HepG2 (cell line): ENCODE measurements at regions of chr1 and their contacts with region 1.

Region 1: GRCh38 chr1:61352845-61353435 is 270.6 kb downstream of the NFIA start:
- DNase-seq: no peak
- ATAC-seq: no peak
- H3K4me3 ChIP-seq: no peak overlapping the region
- H3K27ac ChIP-seq: no peak overlapping the region
- H3K4me1 ChIP-seq: no peaks in the 10 kb centered on the region
- H3K27me3 ChIP-seq: no peaks in the 10 kb centered on the region
- CTCF ChIP-seq: no peak
- EP300 ChIP-seq: no peak
- POLR2A ChIP-seq: no peak
- RAD21 ChIP-seq: no peak

Region 2: DNA sequence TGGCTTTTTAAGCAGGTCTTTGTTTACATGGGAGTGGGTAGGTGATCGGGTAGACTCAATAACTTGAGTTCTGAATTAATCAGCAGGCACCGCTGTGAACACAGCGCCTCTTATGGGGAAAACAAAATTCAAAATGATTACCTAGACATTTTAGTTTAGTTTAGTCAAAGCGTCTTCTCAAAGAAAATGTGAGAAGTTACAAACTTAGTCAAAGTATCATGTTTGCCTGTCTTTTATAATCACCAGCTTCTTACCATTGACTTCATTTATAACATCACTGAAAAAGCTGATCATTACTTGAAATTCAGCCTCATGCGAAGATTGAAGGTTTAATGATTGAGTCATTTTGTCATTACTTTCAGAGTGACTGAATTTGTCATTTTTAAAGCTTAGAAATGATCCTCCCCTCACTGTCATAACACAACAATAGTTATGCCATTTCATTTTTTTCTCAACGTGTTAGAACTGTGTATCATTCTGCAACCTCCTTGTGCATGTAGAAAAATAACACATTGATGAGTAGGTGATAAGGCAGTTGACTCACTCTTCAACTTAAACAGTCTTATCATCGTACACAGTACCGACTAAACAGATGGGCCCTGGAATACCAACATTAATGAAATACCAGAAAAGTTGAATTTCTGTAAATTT is 82.1 kb before region 1 on chr1:
- CTCF ChIA-PET with region 1: no interaction called
- POLR2A ChIA-PET with region 1: no interaction called
- in situ Hi-C with region 1: no loop called
- intact Hi-C with region 1: no loop called
- DNase-seq: peak; percentile 46
- ATAC-seq: peak; percentile 62; the same call in 2 of the 3 replicates
- H3K4me3 ChIP-seq: no peak overlapping the region
- H3K27ac ChIP-seq: peak overlapping the region; percentile 17
- H3K4me1 ChIP-seq: peaks cover 60% of the 10 kb centered on the region
- H3K27me3 ChIP-seq: no peaks in the 10 kb centered on the region
- CTCF ChIP-seq: no peak
- EP300 ChIP-seq: peak in 1 of 2 experiments; percentile 57; a peak in 2 of 4 replicates
- POLR2A ChIP-seq: no peak
- RAD21 ChIP-seq: no peak

Region 3: DNA sequence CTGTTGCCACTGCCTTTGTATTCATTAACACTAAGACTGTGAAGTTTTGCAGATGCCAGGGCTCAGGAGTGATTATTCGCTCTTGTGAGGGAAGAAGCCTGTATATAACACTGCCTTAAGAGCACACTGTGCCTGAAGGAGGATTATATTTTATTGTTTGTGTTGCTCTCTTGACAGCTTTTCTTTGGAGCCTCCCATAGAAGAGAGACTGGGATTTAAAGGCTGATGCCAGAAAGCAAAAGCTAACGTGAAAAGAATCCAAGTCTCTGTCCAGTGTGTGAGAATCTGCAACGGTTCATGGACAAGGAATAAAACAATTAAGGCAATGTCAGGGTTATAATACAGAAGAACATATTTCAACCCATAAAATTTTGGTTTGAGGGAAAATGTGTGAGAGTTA is 46.3 kb after region 1 on chr1:
- CTCF ChIA-PET with region 1: no interaction called
- POLR2A ChIA-PET with region 1: no interaction called
- in situ Hi-C with region 1: no loop called
- intact Hi-C with region 1: loop called (anchors 1 kb)
- DNase-seq: no peak
- ATAC-seq: no peak
- H3K4me3 ChIP-seq: no peak overlapping the region
- H3K27ac ChIP-seq: no peak overlapping the region
- H3K4me1 ChIP-seq: no peaks in the 10 kb centered on the region
- H3K27me3 ChIP-seq: no peaks in the 10 kb centered on the region
- CTCF ChIP-seq: no peak
- EP300 ChIP-seq: no peak
- POLR2A ChIP-seq: no peak
- RAD21 ChIP-seq: no peak